K562 (cell line): ENCODE measurements at regions of chr15 and their contacts with region 1.

Region 1: GRCh38 chr15:44029940-44030568 is 165.0 kb downstream of the FRMD5 start:
- DNase-seq: no peak
- ATAC-seq: no peak
- H3K4me3 ChIP-seq: no peak overlapping the region
- H3K27ac ChIP-seq: no peak overlapping the region
- H3K4me1 ChIP-seq: no peaks in the 10 kb centered on the region
- H3K27me3 ChIP-seq: no peaks in the 10 kb centered on the region; a peak in 3 of 5 replicates
- CTCF ChIP-seq: no peak
- EP300 ChIP-seq: no peak
- POLR2A ChIP-seq: no peak
- RAD21 ChIP-seq: no peak

Region 2: GRCh38 chr15:43985976-43986680 is 43.9 kb before region 1 on chr15:
- CTCF ChIA-PET with region 1: interaction called, 10 read pairs
- POLR2A ChIA-PET with region 1: no interaction called
- in situ Hi-C with region 1: no loop called
- intact Hi-C with region 1: no loop called
- DNase-seq: no peak
- ATAC-seq: no peak
- H3K4me3 ChIP-seq: no peak overlapping the region
- H3K27ac ChIP-seq: no peak overlapping the region
- H3K4me1 ChIP-seq: no peaks in the 10 kb centered on the region
- H3K27me3 ChIP-seq: peaks cover 8 to 22% of the 10 kb centered on the region in 2 experiments; a peak in 4 of 5 replicates
- CTCF ChIP-seq: no peak
- EP300 ChIP-seq: no peak
- POLR2A ChIP-seq: no peak
- RAD21 ChIP-seq: no peak

Region 3: GRCh38 chr15:43998607-43999006 is 31.4 kb before region 1 on chr15:
- CTCF ChIA-PET with region 1: no interaction called
- POLR2A ChIA-PET with region 1: no interaction called
- in situ Hi-C with region 1: no loop called
- intact Hi-C with region 1: no loop called
- DNase-seq: peak in 1 of 4 experiments; percentile 4
- ATAC-seq: no peak
- H3K4me3 ChIP-seq: no peak overlapping the region
- H3K27ac ChIP-seq: no peak overlapping the region
- H3K4me1 ChIP-seq: no peaks in the 10 kb centered on the region
- H3K27me3 ChIP-seq: peaks cover 2 to 10% of the 10 kb centered on the region in 2 experiments; a peak in 3 of 5 replicates
- CTCF ChIP-seq: no peak
- EP300 ChIP-seq: no peak
- POLR2A ChIP-seq: no peak
- RAD21 ChIP-seq: no peak

Region 4: GRCh38 chr15:44045217-44045616 is 15.2 kb after region 1 on chr15:
- CTCF ChIA-PET with region 1: no interaction called
- POLR2A ChIA-PET with region 1: no interaction called
- in situ Hi-C with region 1: no loop called
- intact Hi-C with region 1: no loop called
- DNase-seq: no peak
- ATAC-seq: no peak
- H3K4me3 ChIP-seq: no peak overlapping the region
- H3K27ac ChIP-seq: no peak overlapping the region
- H3K4me1 ChIP-seq: no peaks in the 10 kb centered on the region
- H3K27me3 ChIP-seq: no peaks in the 10 kb centered on the region
- CTCF ChIP-seq: no peak
- EP300 ChIP-seq: no peak
- POLR2A ChIP-seq: no peak
- RAD21 ChIP-seq: no peak

Region 5: GRCh38 chr15:44102675-44103254 is 72.7 kb after region 1 on chr15:
- CTCF ChIA-PET with region 1: no interaction called
- POLR2A ChIA-PET with region 1: no interaction called
- in situ Hi-C with region 1: no loop called
- intact Hi-C with region 1: no loop called
- DNase-seq: no peak
- ATAC-seq: no peak
- H3K4me3 ChIP-seq: no peak overlapping the region
- H3K27ac ChIP-seq: no peak overlapping the region
- H3K4me1 ChIP-seq: no peaks in the 10 kb centered on the region
- H3K27me3 ChIP-seq: no peaks in the 10 kb centered on the region; a peak in 1 of 5 replicates
- CTCF ChIP-seq: no peak
- EP300 ChIP-seq: no peak
- POLR2A ChIP-seq: no peak
- RAD21 ChIP-seq: no peak